ENCODE measurements at regions of chr9 and their contacts with region 1.

Region 1: GRCh38 chr9:2849941-2850340 is 6.0 kb upstream of the PUM3 start:
- H3K4me3 Mint-ChIP-seq: no peak overlapping the region
- H3K27ac Mint-ChIP-seq: no peak overlapping the region
- H3K4me1 Mint-ChIP-seq: no peaks in the 10 kb centered on the region
- H3K27me3 Mint-ChIP-seq: peaks cover 11% of the 10 kb centered on the region

Region 2: DNA sequence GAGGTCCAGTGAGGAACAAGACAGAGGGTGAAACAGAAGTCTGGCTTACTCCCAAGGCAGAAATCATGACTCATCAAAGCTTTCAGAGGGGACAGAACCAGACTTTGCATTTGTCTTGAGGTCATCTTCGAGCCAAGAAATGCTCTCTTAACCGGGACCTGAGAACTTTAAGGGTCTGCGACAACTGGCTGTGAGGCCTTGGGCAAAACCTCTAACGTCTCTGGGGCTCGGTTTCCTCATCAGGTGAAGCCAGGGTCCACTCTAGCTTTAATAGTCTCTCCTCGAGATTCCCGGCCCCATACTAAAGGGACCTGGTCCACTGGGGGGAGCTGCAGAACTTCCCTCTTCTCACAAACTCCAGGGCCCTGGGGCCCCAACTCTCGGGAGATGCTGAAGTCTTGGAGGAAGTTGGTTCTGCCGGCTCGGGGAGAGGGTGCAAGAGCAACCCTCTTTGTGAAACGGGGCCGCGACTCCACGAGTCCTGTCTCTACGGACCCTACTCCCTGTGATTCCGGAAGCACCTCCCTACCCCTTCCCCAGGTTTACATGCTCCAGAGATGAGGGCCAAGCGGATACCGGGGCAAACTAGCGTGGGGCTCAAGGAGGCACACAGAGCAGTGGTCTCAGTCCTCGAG is 1447.3 kb after region 1 on chr9:
- intact Hi-C with region 1: loop called (anchors 10 kb)
- H3K4me3 Mint-ChIP-seq: peak overlapping the region; percentile 98
- H3K27ac Mint-ChIP-seq: peak overlapping the region; percentile 86
- H3K4me1 Mint-ChIP-seq: peaks cover 39% of the 10 kb centered on the region
- H3K27me3 Mint-ChIP-seq: peaks cover 43% of the 10 kb centered on the region

Measured in dendritic cell treated with granulocyte-macrophage colony-stimulating factor and Interleukin-4, amounts not matched to agents 40 ng/mL and 50 ng/mL, for 4 days (primary cell).